Activated CD8-positive, alpha-beta memory T cell treated with anti-CD3 and anti-CD28 coated beads, Interleukin-2, amount 10 ng/mL, durations not matched to agents 7 days and 5 days (primary cell): ENCODE measurements at regions of chr10 and their contacts with region 1.

Region 1: GRCh38 chr10:61750929-61751471 is 88.3 kb downstream of the CABCOCO1 start:
- DNase-seq: peak; percentile 84
- ATAC-seq: peak; percentile 95
- H3K4me3 Mint-ChIP-seq: no peak overlapping the region
- H3K27ac Mint-ChIP-seq: peak overlapping the region; percentile 90
- H3K4me1 Mint-ChIP-seq: peaks cover 26% of the 10 kb centered on the region
- H3K27me3 Mint-ChIP-seq: no peaks in the 10 kb centered on the region

Region 2: GRCh38 chr10:61733358-61733940 is 17.6 kb before region 1 on chr10:
- CTCF ChIA-PET with region 1: interaction called, 13 read pairs
- DNase-seq: no peak
- ATAC-seq: no peak
- H3K4me3 Mint-ChIP-seq: no peak overlapping the region
- H3K27ac Mint-ChIP-seq: no peak overlapping the region
- H3K4me1 Mint-ChIP-seq: peaks cover 3% of the 10 kb centered on the region
- H3K27me3 Mint-ChIP-seq: peaks cover 69% of the 10 kb centered on the region

Region 3: GRCh38 chr10:61760943-61761824 is 10.2 kb after region 1 on chr10:
- CTCF ChIA-PET with region 1: interaction called, 16 read pairs
- DNase-seq: no peak
- ATAC-seq: no peak
- H3K4me3 Mint-ChIP-seq: no peak overlapping the region
- H3K27ac Mint-ChIP-seq: no peak overlapping the region
- H3K4me1 Mint-ChIP-seq: peaks cover 18% of the 10 kb centered on the region
- H3K27me3 Mint-ChIP-seq: no peaks in the 10 kb centered on the region

Region 4: DNA sequence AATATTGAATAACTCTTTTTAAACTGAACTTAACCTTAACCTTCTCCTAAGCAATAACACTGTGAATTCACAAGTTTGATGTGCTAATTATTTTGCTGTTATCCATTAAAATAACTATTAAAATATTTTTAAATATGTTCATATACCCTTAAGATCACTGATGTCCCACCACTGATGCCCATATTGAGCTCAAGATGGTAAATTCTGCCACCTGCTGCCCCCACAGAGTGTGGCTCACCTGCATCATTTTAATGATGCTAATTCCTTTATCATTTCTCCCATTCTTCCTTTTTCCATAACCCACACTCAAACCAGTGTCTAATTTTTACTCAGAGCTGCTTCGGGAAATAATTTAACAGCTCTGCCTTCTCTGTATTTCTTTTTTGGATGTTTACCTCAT is 68.2 kb after region 1 on chr10:
- CTCF ChIA-PET with region 1: interaction called, 15 read pairs
- DNase-seq: no peak
- ATAC-seq: no peak
- H3K4me3 Mint-ChIP-seq: no peak overlapping the region
- H3K27ac Mint-ChIP-seq: no peak overlapping the region
- H3K4me1 Mint-ChIP-seq: peaks cover 8% of the 10 kb centered on the region
- H3K27me3 Mint-ChIP-seq: no peaks in the 10 kb centered on the region

Region 5: DNA sequence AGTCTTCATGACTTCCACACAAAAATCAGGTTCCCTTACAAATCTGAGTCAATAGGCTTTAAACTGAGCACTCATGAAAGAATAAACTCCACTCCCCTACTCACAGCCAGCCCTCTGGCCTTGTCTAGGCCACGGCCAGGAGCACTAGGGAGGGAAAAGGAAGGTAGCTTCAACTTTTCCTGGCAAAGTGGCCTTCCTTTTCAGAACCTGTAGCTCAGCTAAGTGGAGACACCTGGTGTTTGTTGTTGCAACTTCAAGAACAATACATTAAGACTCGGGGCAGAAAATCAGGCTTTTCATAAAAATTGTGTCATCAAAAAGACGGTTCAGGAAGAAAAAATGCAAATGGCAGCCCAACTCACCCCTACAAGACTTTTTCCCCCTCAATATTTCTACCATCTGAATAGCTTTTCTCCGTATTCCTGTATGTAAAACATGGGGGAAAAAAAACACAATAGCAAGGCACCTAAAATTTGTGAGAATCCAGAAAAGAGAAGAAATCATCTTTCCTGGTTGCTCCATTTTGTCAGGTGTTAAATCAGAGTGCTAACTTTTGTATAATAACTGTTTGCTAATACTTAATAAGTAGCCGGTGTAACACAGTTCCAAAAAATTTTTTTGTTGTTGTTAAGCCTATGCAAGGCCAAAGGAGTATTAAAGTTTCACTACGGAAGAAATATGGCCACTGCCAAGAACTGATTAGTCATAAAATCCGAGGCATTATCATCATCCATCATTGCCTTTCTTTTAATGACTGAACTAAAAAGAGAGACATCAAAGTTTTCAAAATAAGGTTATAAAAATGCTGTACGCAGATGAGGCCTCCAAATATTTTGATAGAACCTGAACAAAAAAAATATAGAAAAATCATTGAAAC is 84.3 kb after region 1 on chr10:
- CTCF ChIA-PET with region 1: interaction called, 44 read pairs
- DNase-seq: no peak
- ATAC-seq: peak; percentile 49
- H3K4me3 Mint-ChIP-seq: no peak overlapping the region
- H3K27ac Mint-ChIP-seq: peak overlapping the region; percentile 38
- H3K4me1 Mint-ChIP-seq: peaks cover 17% of the 10 kb centered on the region
- H3K27me3 Mint-ChIP-seq: no peaks in the 10 kb centered on the region

Region 6: DNA sequence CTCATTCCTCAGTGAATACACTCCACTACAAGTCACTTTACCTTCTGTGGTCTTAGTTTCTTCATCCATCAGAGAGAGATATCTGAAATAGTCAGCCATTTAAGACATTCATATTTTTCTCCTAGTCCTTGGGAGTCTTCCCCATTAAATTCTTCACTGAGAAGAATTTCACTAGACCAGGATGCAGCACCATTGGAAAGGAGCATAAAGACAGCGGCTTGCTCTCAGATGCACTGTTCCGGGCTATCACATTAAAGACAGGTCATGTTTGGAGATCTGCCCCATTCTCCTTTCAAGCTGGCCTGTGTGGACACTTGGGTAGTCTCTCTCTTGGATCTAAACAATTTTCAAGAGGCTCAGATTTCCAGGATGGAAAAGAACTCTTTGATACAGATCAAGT is 118.3 kb after region 1 on chr10:
- CTCF ChIA-PET with region 1: interaction called, 12 read pairs
- DNase-seq: no peak
- ATAC-seq: no peak
- H3K4me3 Mint-ChIP-seq: no peak overlapping the region
- H3K27ac Mint-ChIP-seq: no peak overlapping the region
- H3K4me1 Mint-ChIP-seq: peaks cover 11% of the 10 kb centered on the region
- H3K27me3 Mint-ChIP-seq: no peaks in the 10 kb centered on the region

Region 7: GRCh38 chr10:61896854-61897661 is 146.1 kb after region 1 on chr10:
- CTCF ChIA-PET with region 1: interaction called, 11 read pairs
- DNase-seq: peak; percentile 79
- ATAC-seq: peak; percentile 76
- H3K4me3 Mint-ChIP-seq: peak overlapping the region; percentile 67
- H3K27ac Mint-ChIP-seq: peak overlapping the region; percentile 99
- H3K4me1 Mint-ChIP-seq: peaks cover 29% of the 10 kb centered on the region
- H3K27me3 Mint-ChIP-seq: no peaks in the 10 kb centered on the region